ENCODE measurements at regions of chr1 and their contacts with region 1.

Region 1: DNA sequence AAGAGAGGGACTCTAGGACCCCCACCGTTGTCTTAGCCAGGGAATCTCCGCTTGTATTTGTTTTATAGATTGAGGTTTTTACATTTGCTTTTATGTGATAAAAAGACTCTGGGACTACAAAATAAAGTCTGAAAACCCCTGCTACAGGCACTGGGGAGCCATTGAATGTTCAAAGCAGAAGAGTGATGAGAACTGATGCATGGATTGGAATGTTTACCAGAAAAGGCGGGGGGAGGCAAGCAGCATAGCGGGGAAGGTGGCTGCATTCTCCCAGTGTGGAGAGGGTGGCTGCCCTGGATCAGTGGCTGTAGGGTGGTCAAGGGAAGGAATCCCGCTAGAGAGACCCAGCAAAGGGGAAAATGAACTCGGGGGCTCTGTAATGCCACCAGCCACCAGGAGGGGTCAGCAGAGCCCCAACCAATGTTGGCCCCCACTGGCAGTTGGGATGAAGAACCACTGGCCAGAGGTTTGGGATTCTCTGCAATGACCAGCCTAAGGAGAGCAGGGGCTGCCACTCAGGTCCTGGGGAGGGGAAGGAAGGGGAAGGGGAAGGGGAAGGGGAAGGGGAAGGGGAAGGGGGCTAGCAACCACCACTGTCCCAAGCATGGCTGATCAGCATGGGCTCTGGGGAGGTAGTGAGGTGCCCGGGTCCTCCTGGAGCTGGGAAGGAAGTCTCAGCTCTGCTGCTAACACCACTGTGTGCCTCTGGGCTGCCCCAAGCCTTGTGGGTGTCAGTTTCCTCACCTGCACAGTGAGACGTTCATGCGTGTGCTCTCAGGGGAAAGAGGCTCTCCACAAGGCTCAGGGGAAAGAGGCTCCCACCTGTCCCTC is 19.2 kb upstream of the PEF1 start:
- DNase-seq: peak; percentile 34 to 79 (median 62)
- H3K4me3 ChIP-seq: no peak overlapping the region
- H3K27ac ChIP-seq: no peak overlapping the region
- H3K4me1 ChIP-seq: no peaks in the 10 kb centered on the region
- H3K27me3 ChIP-seq: no peaks in the 10 kb centered on the region
- CTCF ChIP-seq: peak; percentile 86 to 99 (median 95)
- POLR2A ChIP-seq: no peak

Region 2: DNA sequence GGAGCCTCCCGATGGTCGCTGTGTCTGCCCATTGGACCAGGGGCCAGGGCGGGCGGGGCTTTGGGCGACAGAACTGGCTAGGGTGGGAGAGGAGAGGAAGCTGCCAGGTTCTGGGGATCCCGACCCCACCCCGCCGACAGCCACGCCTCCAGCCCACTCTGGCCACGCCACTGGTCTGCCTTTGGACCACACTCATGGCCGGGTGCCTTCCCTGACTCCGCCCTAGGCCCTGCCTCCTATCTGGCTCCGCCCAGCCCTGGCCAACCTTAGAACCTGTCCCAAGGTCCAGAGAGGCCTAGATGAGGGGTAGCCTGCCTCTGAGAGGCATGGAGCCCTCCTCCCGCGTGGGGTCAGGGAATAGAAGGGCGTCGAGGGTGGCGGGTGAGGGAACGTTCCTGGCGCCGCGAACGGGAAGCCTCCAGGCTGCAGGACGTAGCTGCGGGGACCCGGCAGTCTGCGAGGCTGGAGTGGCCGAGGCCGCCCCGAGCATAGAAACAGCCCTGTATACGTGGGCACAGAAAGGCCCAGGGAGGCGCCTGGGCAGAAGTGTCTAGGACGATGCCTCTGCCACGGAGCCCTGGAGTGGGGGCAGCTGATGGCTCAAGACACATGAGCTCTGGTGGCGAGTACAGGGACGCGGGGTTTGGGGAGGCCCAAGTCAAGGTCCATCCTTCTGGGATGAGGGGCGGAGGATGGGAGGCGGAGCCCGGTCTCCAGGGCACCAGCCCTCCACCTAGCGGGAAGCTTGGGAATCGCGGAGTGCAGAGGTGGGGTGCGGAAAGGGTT is 51.4 kb after region 1 on chr1:
- intact Hi-C with region 1: loop called in 1 of 2 experiments (anchors 10 kb)
- DNase-seq: peak; percentile 93 to 97 (median 96)
- H3K4me3 ChIP-seq: peak overlapping the region in 2 of 4 donors; percentile 35 to 40
- H3K27ac ChIP-seq: peak overlapping the region; percentile 85 to 97 (median 95)
- H3K4me1 ChIP-seq: peaks cover 26 to 38% of the 10 kb centered on the region in 2 donors
- H3K27me3 ChIP-seq: no peaks in the 10 kb centered on the region
- CTCF ChIP-seq: peak; percentile 77 to 88 (median 83)
- POLR2A ChIP-seq: peak; percentile 31 to 77

Region 3: DNA sequence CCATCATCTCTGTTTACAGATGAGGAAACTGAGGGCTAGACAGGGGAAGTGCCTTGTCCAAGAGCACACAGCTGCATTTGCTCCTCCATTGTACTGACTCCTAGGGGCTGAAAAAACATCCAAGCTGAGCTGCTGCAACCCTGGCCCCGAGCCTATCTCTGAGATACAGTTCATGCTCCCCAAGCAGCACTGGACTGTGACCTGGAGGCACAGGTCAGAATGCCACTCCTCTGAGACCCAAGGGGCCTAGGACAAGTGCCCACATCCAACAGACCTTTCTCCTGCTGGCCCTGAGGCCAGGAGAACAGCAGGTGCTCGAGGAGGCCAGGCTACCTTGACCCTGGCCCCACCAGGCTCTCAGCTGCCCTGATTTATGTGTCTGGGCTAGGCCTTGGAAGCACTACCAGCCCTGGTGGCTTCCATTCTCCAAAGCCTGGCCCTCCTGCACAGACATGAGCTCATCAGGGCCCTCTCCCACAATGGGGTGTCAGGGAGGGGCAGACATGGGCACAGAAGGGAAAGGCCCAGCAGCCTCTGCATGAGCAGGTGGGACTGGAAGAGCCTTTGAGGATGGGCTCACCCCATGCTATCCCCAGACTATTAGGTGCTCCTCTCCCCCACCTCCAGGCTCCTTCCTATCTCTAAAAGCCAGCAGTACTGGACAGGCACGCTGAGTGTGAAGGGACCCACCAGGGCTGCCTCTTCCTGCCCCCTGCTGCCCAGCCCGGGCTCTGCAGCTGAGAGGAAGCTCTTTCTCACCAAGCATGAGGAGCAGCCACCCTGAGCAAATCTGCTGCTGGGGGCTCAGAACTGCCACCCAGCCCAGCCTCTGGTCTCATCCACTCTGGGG is 81.5 kb after region 1 on chr1:
- intact Hi-C with region 1: loop called (anchors 5 kb)
- DNase-seq: peak; percentile 63 to 86 (median 78)
- H3K4me3 ChIP-seq: no peak overlapping the region
- H3K27ac ChIP-seq: no peak overlapping the region
- H3K4me1 ChIP-seq: peaks cover 0 to 5% of the 10 kb centered on the region in 2 donors
- H3K27me3 ChIP-seq: no peaks in the 10 kb centered on the region
- CTCF ChIP-seq: peak; percentile 62 to 80 (median 69)
- POLR2A ChIP-seq: no peak

Region 4: GRCh38 chr1:31789259-31790065 is 125.6 kb after region 1 on chr1:
- intact Hi-C with region 1: loop called (anchors 2 kb)
- DNase-seq: peak; percentile 92 to 98 (median 95)
- H3K4me3 ChIP-seq: peak overlapping the region in 2 of 4 donors; percentile 69 to 72
- H3K27ac ChIP-seq: peak overlapping the region in 3 of 5 donors; percentile 71 to 95 (median 80)
- H3K4me1 ChIP-seq: no peaks in the 10 kb centered on the region
- H3K27me3 ChIP-seq: no peaks in the 10 kb centered on the region
- CTCF ChIP-seq: peak; percentile 76 to 98 (median 92)
- POLR2A ChIP-seq: no peak

Region 5: DNA sequence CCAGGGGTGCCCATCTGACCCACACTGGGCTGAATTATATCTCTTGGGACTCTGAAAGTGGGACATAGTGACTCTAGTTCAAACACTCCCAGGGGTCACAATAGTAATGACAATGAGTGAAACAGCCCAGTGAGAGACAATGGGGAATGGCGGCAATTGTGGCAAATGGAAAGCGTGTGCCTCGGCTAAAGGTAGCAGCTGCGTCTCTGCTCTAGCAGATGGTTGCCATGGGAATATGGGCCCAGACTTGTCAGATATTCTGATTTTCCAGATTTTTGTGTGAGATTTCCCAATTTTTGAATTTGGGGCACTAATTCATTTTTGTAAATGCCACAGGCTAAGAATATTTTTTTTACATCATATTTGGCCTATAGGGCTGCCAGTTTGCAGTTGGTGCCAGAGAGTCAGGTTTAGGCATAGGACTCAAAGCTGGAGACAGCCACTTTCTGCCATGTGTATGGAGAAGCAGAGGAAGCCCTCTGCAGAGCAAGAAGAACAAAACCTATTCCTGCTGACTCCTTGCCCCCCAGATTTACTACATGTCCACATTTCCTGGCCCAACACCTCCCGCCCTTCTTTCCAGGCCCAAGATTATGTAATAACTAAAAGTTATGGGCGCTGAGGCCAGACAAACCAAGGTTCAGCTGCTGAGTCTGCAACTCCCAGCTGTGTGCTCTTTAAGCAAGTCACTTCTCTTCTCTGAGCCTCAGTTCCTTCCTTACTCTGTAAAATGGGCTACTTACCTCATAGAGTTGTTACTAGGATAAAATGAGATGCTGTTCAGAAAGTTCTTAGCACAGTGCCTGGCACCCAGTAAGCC is 295.9 kb after region 1 on chr1:
- intact Hi-C with region 1: loop called in 1 of 2 experiments (anchors 10 kb)
- DNase-seq: peak in 1 of 7 donors; percentile 46
- H3K4me3 ChIP-seq: no peak overlapping the region
- H3K27ac ChIP-seq: peak overlapping the region in 1 of 5 donors; percentile 32
- H3K4me1 ChIP-seq: peaks cover 16 to 30% of the 10 kb centered on the region in 2 donors
- H3K27me3 ChIP-seq: no peaks in the 10 kb centered on the region
- CTCF ChIP-seq: no peak
- POLR2A ChIP-seq: no peak